B cell (primary cell): ENCODE measurements at regions of chr17 and their contacts with region 1.

Region 1: GRCh38 chr17:43673516-43674323 is 12.0 kb upstream of the MEOX1 start:
- DNase-seq: peak; percentile 80
- ATAC-seq: peak; percentile 70
- H3K4me3 ChIP-seq: no peak overlapping the region
- H3K4me3 Mint-ChIP-seq: no peak overlapping the region
- H3K27ac ChIP-seq: no peak overlapping the region
- H3K27ac Mint-ChIP-seq: peak overlapping the region; percentile 11
- H3K4me1 ChIP-seq: peaks cover 6 to 14% of the 10 kb centered on the region in 2 donors
- H3K4me1 Mint-ChIP-seq: peaks cover 7% of the 10 kb centered on the region
- H3K27me3 ChIP-seq: peaks cover 0 to 9% (median 0%) of the 10 kb centered on the region in 4 experiments
- H3K27me3 Mint-ChIP-seq: peaks cover 14% of the 10 kb centered on the region
- CTCF ChIP-seq: peak; percentile 88

Region 2: GRCh38 chr17:43601280-43602039 is 72.3 kb before region 1 on chr17:
- CTCF ChIA-PET with region 1: interaction called, 4 read pairs
- POLR2A ChIA-PET with region 1: interaction called, 10 read pairs
- intact Hi-C with region 1: no loop called
- DNase-seq: no peak
- ATAC-seq: no peak
- H3K4me3 ChIP-seq: no peak overlapping the region
- H3K4me3 Mint-ChIP-seq: no peak overlapping the region
- H3K27ac ChIP-seq: no peak overlapping the region
- H3K27ac Mint-ChIP-seq: no peak overlapping the region
- H3K4me1 ChIP-seq: no peaks in the 10 kb centered on the region
- H3K4me1 Mint-ChIP-seq: peaks cover 6% of the 10 kb centered on the region
- H3K27me3 ChIP-seq: peaks cover 0 to 3% (median 1%) of the 10 kb centered on the region in 4 experiments
- H3K27me3 Mint-ChIP-seq: peaks cover 24% of the 10 kb centered on the region
- CTCF ChIP-seq: no peak

Region 3: GRCh38 chr17:43683928-43684653 is 10.4 kb after region 1 on chr17:
- CTCF ChIA-PET with region 1: interaction called, 19 read pairs
- POLR2A ChIA-PET with region 1: no interaction called
- intact Hi-C with region 1: no loop called
- DNase-seq: no peak
- ATAC-seq: no peak
- H3K4me3 ChIP-seq: no peak overlapping the region
- H3K4me3 Mint-ChIP-seq: no peak overlapping the region
- H3K27ac ChIP-seq: no peak overlapping the region
- H3K27ac Mint-ChIP-seq: no peak overlapping the region
- H3K4me1 ChIP-seq: no peaks in the 10 kb centered on the region
- H3K4me1 Mint-ChIP-seq: no peaks in the 10 kb centered on the region
- H3K27me3 ChIP-seq: no peaks in the 10 kb centered on the region
- H3K27me3 Mint-ChIP-seq: peaks cover 11% of the 10 kb centered on the region
- CTCF ChIP-seq: no peak

Region 4: DNA sequence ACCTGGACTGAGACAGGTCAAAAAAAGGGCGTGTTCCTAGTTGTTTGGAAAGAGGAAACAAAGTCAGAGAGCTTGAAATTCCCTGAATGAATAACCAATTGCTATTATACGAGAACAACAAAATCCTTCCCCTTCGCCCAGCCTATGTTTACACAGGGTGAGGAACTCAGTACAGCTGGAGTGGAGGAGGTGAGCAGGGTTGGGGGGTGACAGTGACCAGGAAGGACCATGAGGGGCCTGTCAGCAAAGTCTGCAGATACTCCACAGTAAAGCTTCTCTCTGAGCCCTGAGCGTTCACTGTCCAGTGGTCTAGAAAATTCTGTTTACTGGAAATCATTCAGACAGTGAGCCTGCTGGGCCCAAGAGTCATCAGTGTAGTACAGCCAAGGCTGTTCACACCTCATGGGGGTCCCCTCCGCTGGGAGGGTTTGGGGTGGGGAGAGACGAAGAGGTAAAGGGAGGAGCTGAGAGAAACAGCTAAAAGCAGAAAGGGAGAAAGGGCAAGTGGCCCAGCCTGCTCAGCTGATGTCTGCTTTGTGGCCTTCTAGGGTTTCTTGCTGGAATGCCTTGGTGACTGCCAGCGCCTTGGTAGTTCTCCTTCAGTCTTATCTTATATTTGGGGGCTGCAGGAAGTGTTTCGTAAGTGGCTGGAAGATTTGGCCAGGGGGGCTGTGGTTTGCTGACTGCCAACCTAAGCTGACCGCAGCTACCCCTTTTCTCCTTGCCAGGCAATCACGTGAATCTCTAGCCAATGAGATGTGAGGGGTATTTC is 99.3 kb after region 1 on chr17:
- CTCF ChIA-PET with region 1: no interaction called
- POLR2A ChIA-PET with region 1: no interaction called
- intact Hi-C with region 1: no loop called
- DNase-seq: peak; percentile 37
- ATAC-seq: peak; percentile 28
- H3K4me3 ChIP-seq: no peak overlapping the region
- H3K4me3 Mint-ChIP-seq: peak overlapping the region; percentile 45
- H3K27ac ChIP-seq: peak overlapping the region; percentile 18 to 39
- H3K27ac Mint-ChIP-seq: peak overlapping the region; percentile 76
- H3K4me1 ChIP-seq: peaks cover 29 to 37% of the 10 kb centered on the region in 2 donors
- H3K4me1 Mint-ChIP-seq: peaks cover 41% of the 10 kb centered on the region
- H3K27me3 ChIP-seq: no peaks in the 10 kb centered on the region
- H3K27me3 Mint-ChIP-seq: no peaks in the 10 kb centered on the region
- CTCF ChIP-seq: no peak

Region 5: DNA sequence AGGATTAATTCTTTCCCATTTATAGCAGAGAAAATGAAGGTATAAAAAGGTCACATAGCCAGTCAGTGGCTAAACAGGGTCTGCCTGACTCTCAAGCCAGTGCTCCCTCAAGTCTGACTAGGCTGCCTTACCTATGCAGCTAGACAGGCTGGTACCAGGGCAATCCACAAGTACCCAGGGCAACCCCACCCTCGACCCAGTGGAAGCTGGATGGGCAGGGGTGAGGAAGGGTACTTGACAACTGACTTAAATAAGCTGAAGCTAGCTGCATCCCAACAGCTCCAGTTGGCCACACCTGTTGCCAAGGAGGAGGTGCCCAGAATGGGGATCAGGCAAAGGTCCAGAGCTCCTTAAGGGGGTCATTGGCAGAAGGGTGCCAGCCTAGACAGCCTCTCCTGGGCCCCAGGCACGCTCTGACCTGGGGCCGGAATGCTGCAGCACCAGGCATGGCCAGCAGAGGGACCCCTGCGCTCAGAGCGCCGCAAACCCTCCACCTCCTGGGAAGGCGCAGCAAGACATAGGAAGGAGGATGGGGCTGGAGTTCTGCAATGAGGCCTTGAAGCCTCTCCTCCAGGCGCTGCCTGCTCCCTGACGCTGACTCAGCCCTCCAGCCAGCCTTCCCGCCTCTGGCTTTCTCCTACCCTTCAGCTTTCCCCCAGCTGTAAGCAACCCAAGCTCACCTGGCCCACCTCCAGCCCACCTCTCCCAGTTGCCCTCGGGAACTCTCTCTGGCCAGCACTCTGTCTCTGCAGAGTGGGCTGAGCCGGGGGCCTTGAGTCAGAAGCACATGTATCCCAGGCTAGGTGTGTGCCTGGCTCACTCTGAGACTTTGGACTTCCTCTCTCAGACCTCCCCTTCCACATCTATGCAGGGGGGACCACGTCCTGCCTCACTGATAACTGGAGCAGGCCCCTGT is 204.8 kb after region 1 on chr17:
- CTCF ChIA-PET with region 1: no interaction called
- POLR2A ChIA-PET with region 1: no interaction called
- intact Hi-C with region 1: no loop called
- DNase-seq: peak; percentile 76
- ATAC-seq: peak; percentile 93
- H3K4me3 ChIP-seq: no peak overlapping the region
- H3K4me3 Mint-ChIP-seq: no peak overlapping the region
- H3K27ac ChIP-seq: no peak overlapping the region
- H3K27ac Mint-ChIP-seq: no peak overlapping the region
- H3K4me1 ChIP-seq: peaks cover 0 to 3% of the 10 kb centered on the region in 2 donors
- H3K4me1 Mint-ChIP-seq: no peaks in the 10 kb centered on the region
- H3K27me3 ChIP-seq: peaks cover 0 to 22% (median 3%) of the 10 kb centered on the region in 4 experiments
- H3K27me3 Mint-ChIP-seq: peaks cover 26% of the 10 kb centered on the region
- CTCF ChIP-seq: peak; percentile 98